Activated T-helper 1 cell treated with anti-CD3 and anti-CD28 coated beads, Interleukin-12 subunit alpha, Interleukin-12 subunit beta, Interleukin-2, Interleukin-4 antibody, amounts not matched to agents 30 ng/mL and 10 ng/mL and 1 ng/mL, durations not matched to agents 14 hours and 24 hours and 36 hours (primary cell): ENCODE measurements at regions of chr10 and their contacts with region 1.

Region 1: DNA sequence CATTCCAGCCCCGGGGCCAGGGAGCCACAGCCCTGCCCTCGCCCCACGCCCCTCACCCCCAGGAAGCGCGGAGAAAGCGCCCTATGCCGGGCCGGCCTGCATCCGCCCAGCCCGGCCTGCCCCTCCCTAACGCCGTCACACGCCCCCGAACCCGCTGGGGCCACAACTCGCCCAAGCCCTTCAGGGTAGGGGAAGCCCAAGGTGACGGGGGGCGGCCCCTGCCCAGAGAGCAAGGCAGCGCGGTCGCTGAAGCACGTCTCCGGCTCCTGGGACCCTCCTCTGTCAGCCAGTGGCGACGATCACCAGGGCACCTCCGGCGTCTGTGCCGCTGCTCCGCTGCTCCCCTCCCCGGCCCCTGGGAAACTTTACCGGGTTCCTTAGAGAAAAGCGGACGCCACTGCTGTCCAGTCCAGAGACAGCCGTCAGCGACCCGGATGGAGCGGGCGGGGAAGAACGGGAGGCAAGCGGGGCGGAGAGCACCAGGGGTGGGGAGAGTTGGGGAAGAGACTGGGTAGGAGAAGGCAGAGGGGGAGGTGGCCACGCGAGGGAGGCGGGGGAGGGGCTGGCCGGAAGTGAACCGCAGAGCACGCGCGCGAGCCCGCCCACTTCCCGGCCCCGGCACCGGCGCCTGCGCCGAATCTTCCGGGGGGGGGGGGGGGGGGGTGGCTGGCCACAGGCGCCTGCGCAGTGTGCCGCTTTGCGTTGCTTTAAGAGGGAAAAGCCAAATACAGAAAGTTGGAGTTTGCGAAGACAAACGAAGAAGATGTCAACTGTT is at the start of gene HERC4:
- DNase-seq: peak; percentile 82
- H3K4me3 Mint-ChIP-seq: peak within 1 kb of the TSS; percentile 97
- H3K27ac Mint-ChIP-seq: peak within 1 kb of the TSS; percentile 90
- H3K4me1 Mint-ChIP-seq: peaks cover 41% of the 10 kb centered on the region
- H3K27me3 Mint-ChIP-seq: peaks cover 2% of the 10 kb centered on the region
- total RNA-seq, gene HERC4: 42.3 and 53.1 TPM in 2 replicates

Region 2: DNA sequence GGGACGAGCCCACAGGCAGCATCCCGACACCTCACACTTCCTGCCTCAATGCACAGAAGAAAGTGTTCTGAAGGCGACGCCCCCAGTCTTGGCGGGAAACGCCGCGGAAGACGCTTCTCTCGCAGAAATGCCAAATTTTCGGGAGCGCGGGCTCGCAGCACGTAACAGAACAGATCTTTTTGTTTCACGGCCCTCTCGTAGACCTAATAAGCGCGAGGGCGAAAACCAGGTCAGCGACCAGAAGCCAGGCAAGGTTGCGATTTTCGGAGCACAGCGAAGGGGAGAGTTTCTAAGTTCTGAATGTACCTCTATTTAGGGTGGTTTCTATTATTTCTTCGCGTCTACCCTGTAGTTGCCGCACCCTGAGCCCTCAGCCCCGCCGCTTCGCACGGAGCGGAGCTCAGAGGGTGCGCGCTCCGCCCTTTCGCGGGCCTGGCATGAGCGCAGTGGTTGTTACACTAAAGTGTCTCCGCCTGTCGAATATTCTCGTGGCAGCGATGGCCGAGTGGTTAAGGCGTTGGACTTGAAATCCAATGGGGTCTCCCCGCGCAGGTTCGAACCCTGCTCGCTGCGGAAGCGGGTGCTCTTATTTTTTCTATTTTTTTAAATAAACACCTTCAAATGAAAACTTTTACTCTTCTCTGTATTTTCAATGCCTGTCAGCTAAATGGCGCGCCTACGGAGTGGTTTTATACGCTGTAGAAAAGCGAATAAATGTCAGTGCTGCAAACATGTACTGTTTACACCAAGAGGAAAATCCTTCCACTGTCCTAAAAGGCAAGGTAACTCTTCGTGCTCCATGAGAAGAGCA is 310.7 kb before region 1 on chr10:
- intact Hi-C with region 1: loop called (anchors 1 kb)
- DNase-seq: peak; percentile 95
- H3K4me3 Mint-ChIP-seq: peak overlapping the region; percentile 86
- H3K27ac Mint-ChIP-seq: peak overlapping the region; percentile 94
- H3K4me1 Mint-ChIP-seq: peaks cover 28% of the 10 kb centered on the region
- H3K27me3 Mint-ChIP-seq: peaks cover 9% of the 10 kb centered on the region

Region 3: DNA sequence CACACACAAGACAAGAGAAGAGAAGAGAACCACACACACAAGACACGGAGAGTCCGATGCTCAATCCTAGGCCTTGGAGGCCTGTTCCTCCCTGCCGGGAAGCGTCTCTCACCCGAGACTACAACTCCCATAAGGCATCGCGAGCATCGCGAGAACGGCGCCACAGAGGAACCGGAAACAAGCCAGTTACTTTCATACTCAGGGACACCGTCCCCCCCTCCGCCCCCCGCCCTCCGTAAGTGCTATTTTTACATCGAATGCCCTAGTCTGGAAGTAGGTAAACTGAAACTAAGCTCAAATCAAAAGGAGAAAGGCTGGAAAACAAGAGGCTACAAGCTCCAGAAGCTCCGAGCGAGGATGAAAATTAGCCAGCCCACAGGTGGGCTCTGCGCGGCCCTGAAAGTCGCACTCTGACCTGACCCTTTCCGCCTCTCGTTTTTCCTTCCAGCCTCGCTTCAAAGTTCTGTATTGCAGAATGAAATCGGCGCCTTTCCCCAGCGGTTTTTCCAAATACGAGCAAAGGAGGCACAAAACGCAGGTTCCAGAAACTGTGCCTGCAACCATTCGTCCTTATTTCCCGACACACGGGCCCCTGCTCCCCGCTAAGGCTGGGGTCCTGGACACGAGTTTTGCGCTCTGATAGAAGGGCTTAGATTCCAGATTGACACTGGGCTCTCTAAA is 225.5 kb before region 1 on chr10:
- intact Hi-C with region 1: loop called (anchors 1 kb)
- DNase-seq: peak; percentile 92
- H3K4me3 Mint-ChIP-seq: peak overlapping the region; percentile 91
- H3K27ac Mint-ChIP-seq: peak overlapping the region; percentile 95
- H3K4me1 Mint-ChIP-seq: no peaks in the 10 kb centered on the region
- H3K27me3 Mint-ChIP-seq: no peaks in the 10 kb centered on the region

Region 4: DNA sequence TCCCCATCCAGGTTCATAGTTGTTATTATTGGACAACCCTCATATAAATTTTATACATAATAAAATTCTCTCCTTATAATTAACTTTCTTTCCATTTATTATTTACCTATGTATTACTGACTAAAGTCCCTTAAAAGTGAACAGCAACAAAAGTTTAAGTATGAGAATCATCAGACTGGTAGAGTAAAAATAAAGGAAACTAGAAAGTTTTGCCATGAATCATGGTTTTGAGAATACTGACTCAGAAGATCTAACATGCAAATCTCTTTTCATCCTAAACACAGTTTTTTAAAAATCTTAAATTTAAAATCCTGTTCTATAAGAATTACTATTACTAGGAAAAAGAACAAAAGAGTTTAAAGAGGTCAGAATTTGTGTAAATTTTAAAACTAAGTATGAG is 31.9 kb before region 1 on chr10:
- intact Hi-C with region 1: loop called (anchors 2 kb)
- DNase-seq: no peak
- H3K4me3 Mint-ChIP-seq: no peak overlapping the region
- H3K27ac Mint-ChIP-seq: no peak overlapping the region
- H3K4me1 Mint-ChIP-seq: peaks cover 12% of the 10 kb centered on the region
- H3K27me3 Mint-ChIP-seq: no peaks in the 10 kb centered on the region

Region 5: GRCh38 chr10:68156373-68157185 is 81.6 kb after region 1 on chr10:
- intact Hi-C with region 1: loop called (anchors 2 kb)
- DNase-seq: peak; percentile 26
- H3K4me3 Mint-ChIP-seq: no peak overlapping the region
- H3K27ac Mint-ChIP-seq: no peak overlapping the region
- H3K4me1 Mint-ChIP-seq: no peaks in the 10 kb centered on the region
- H3K27me3 Mint-ChIP-seq: no peaks in the 10 kb centered on the region

Region 6: DNA sequence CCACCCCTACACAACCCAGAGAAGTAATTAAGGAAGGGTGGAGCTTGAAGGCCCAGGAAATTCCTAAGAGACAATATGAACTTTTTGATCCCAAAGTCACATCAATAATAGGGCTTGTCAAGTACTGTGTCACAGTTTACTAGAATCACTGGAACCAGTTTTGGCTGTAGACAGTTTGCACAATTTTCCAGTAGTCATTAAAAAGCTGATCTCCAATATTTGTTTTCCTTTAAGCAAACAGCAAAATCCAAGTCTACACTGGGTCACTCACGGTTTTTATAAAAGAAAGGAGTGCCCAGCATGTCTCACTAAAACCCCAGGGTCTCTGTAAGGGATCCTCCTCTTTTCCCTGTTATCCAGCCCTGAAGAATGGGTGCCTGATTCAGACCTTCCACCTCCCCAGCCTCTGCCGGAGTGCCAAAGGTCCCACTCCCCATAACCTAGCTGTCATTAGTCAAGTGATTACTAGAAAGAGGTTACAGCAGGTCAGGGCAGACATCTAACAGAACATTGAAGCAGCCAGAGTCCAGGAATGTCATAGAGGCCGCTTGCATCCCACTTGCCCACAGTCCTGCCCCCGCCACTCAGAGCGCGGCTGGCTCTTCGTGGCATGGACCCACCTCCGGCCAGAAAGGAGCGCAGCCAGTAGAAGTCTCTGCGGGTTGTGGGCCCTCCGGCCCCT is 451.8 kb after region 1 on chr10:
- intact Hi-C with region 1: loop called (anchors 1 kb)
- DNase-seq: no peak
- H3K4me3 Mint-ChIP-seq: peak overlapping the region; percentile 93
- H3K27ac Mint-ChIP-seq: peak overlapping the region; percentile 84
- H3K4me1 Mint-ChIP-seq: peaks cover 7% of the 10 kb centered on the region
- H3K27me3 Mint-ChIP-seq: no peaks in the 10 kb centered on the region